Heart right ventricle (tissue), 16 donors: ENCODE measurements at regions of chr5 and their contacts with region 1.

Region 1: GRCh38 chr5:147927901-147928300 is 21.6 kb upstream of the C5orf46 start:
- DNase-seq: no peak
- ATAC-seq: no peak
- H3K4me3 ChIP-seq: no peak overlapping the region
- H3K27ac ChIP-seq: no peak overlapping the region
- H3K4me1 ChIP-seq: peaks cover 0 to 5% (median 0%) of the 10 kb centered on the region in 9 donors
- H3K27me3 ChIP-seq: no peaks in the 10 kb centered on the region
- CTCF ChIP-seq: no peak

Region 2: GRCh38 chr5:147887024-147887627 is 40.8 kb before region 1 on chr5:
- intact Hi-C with region 1: loop called in 3 of 10 experiments (anchors 5 to 10 kb)
- DNase-seq: no peak
- ATAC-seq: no peak
- H3K4me3 ChIP-seq: no peak overlapping the region
- H3K27ac ChIP-seq: no peak overlapping the region
- H3K4me1 ChIP-seq: peaks cover 0 to 10% (median 2%) of the 10 kb centered on the region in 9 donors
- H3K27me3 ChIP-seq: no peaks in the 10 kb centered on the region
- CTCF ChIP-seq: peak; percentile 8 to 69 (median 59)

Region 3: GRCh38 chr5:147963948-147964693 is 36.2 kb after region 1 on chr5:
- intact Hi-C with region 1: no loop called
- DNase-seq: peak; percentile 7 to 44
- ATAC-seq: peak; percentile 58 to 95 (median 91)
- H3K4me3 ChIP-seq: no peak overlapping the region
- H3K27ac ChIP-seq: peak overlapping the region; percentile 59 to 89 (median 74)
- H3K4me1 ChIP-seq: peaks cover 0 to 36% (median 15%) of the 10 kb centered on the region in 9 donors
- H3K27me3 ChIP-seq: peaks cover 0 to 2% (median 0%) of the 10 kb centered on the region in 7 donors
- CTCF ChIP-seq: no peak